ENCODE measurements at regions of chr1 and their contacts with region 1.

Region 1: GRCh38 chr1:206628916-206629315 is 6.4 kb upstream of the DYRK3 start:
- DNase-seq: no peak
- H3K4me3 ChIP-seq: no peak overlapping the region
- H3K27ac ChIP-seq: no peak overlapping the region
- H3K4me1 ChIP-seq: peaks cover 13% of the 10 kb centered on the region
- H3K27me3 ChIP-seq: no peaks in the 10 kb centered on the region
- CTCF ChIP-seq: no peak

Region 2: GRCh38 chr1:206693029-206693428 is 64.1 kb after region 1 on chr1:
- CTCF ChIA-PET with region 1: no interaction called
- dilution Hi-C with region 1: loop called (anchors 5 kb)
- in situ Hi-C with region 1: no loop called
- intact Hi-C with region 1: no loop called
- DNase-seq: no peak
- H3K4me3 ChIP-seq: no peak overlapping the region
- H3K27ac ChIP-seq: no peak overlapping the region
- H3K4me1 ChIP-seq: peaks cover 20% of the 10 kb centered on the region
- H3K27me3 ChIP-seq: no peaks in the 10 kb centered on the region
- CTCF ChIP-seq: no peak